OCI-LY7 (cell line): ENCODE measurements at regions of chr6 and their contacts with region 1.

Region 1: GRCh38 chr6:36650848-36651478 is 27.6 kb upstream of the CDKN1A start:
- DNase-seq: peak; percentile 83
- H3K4me3 ChIP-seq: peak overlapping the region; percentile 13
- H3K27ac ChIP-seq: peak overlapping the region; percentile 21
- H3K4me1 ChIP-seq: peaks cover 44% of the 10 kb centered on the region
- CTCF ChIP-seq: no peak

Region 2: GRCh38 chr6:36666726-36667591 is 16.0 kb after region 1 on chr6:
- CTCF ChIA-PET with region 1: no interaction called
- POLR2A ChIA-PET with region 1: interaction called, 55 read pairs
- intact Hi-C with region 1: no loop called
- DNase-seq: peak; percentile 74
- H3K4me3 ChIP-seq: peak overlapping the region; percentile 25
- H3K27ac ChIP-seq: peak overlapping the region; percentile 28
- H3K4me1 ChIP-seq: peaks cover 65% of the 10 kb centered on the region
- CTCF ChIP-seq: no peak

Region 3: GRCh38 chr6:37222125-37222967 is 571.4 kb after region 1 on chr6:
- CTCF ChIA-PET with region 1: no interaction called
- POLR2A ChIA-PET with region 1: no interaction called
- intact Hi-C with region 1: no loop called
- DNase-seq: peak; percentile 79
- H3K4me3 ChIP-seq: peak overlapping the region; percentile 68
- H3K27ac ChIP-seq: no peak overlapping the region
- H3K4me1 ChIP-seq: peaks cover 8% of the 10 kb centered on the region
- CTCF ChIP-seq: no peak